OCI-LY7 (cell line): ENCODE measurements at regions of chr7 and their contacts with region 1.

Region 1: DNA sequence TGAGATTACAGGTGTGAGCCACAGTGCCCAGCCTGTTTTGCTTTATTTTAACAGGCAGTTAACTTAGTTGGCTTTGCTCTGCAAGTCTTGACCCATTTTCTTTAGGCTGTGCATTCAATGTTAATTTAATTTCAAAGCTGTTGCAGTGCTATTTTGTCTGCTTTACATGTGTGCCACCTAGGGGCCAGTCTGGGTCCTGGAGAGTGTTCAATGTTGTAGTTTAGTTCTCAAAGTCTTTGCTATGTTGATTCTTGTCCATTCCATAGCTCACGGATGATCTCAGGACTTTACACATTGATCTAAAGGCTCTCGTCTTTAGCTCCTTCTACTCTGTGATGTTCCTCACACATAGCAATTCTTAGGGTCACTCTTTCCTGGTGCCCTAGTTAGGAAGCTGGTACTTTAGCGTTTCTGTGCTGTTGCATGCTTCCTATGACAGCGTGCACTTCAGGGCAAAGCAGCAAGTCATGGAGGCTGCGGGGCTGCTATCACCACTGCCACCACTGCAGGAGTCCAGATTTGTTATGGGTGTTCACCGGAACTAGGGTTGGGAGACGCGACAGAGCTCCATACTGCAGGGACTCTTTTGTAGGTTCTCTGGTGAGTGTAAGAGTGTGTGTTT is 16.4 kb upstream of the ABCA13 start:
- DNase-seq: peak; percentile 39
- H3K4me3 ChIP-seq: no peak overlapping the region
- H3K27ac ChIP-seq: no peak overlapping the region
- H3K4me1 ChIP-seq: no peaks in the 10 kb centered on the region
- CTCF ChIP-seq: peak; percentile 75

Region 2: GRCh38 chr7:47945261-47946001 is 209.5 kb before region 1 on chr7:
- CTCF ChIA-PET with region 1: no interaction called
- POLR2A ChIA-PET with region 1: interaction called, 4 read pairs
- intact Hi-C with region 1: loop called (anchors 2 kb)
- DNase-seq: peak; percentile 81
- H3K4me3 ChIP-seq: no peak overlapping the region
- H3K27ac ChIP-seq: no peak overlapping the region
- H3K4me1 ChIP-seq: no peaks in the 10 kb centered on the region
- CTCF ChIP-seq: peak; percentile 97

Region 3: DNA sequence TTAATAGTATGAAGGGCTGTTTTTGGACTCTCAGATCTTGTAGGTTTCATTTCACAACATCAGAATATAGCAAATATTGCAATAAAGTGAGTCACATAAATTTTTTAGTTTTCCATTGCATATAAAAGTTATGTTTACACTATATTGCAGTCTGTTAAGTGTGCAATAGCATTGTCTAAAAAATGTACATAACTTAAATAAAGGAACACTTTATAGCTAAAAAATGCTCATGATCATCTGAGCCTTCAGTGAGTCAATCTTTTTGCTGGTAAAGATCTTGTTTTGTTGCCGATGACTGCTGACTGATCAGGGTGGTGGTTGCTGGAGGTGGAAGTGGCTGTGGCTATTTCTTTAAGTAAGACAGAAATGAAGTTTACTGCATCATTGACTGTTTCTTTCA is 58.3 kb after region 1 on chr7:
- CTCF ChIA-PET with region 1: no interaction called
- POLR2A ChIA-PET with region 1: no interaction called
- intact Hi-C with region 1: loop called (anchors 10 kb)
- DNase-seq: no peak
- H3K4me3 ChIP-seq: no peak overlapping the region
- H3K27ac ChIP-seq: no peak overlapping the region
- H3K4me1 ChIP-seq: no peaks in the 10 kb centered on the region
- CTCF ChIP-seq: no peak